Mammary epithelial cell (primary cell): ENCODE measurements at regions of chr15 and their contacts with region 1.

Region 1: DNA sequence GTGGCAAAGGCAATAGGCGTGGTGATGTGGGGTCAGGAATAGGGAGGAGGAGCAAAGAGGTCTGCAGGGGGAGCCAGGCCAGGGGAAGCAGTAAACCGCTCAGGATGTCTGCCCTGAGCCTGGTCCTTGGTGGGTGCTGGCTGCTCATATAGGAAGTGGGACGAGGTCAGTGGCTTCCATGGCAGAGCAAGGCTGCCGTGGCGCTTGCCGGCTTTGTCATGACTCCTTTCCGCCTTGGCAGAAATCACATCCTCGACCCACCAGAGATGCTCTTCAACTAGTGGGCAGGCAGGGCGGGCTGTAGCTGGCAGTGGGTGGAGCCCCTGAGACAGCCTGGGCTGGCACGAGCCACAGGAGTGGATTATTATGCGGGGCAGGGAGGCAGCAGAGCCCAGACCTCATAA is 13.1 kb upstream of the SKOR1 start:
- DNase-seq: no peak
- H3K4me3 ChIP-seq: no peak overlapping the region
- H3K27ac ChIP-seq: no peak overlapping the region
- H3K4me1 ChIP-seq: no peaks in the 10 kb centered on the region
- H3K27me3 ChIP-seq: no peaks in the 10 kb centered on the region
- CTCF ChIP-seq: no peak

Region 2: GRCh38 chr15:67495585-67495984 is 316.7 kb before region 1 on chr15:
- CTCF ChIA-PET with region 1: no interaction called
- dilution Hi-C with region 1: loop called (anchors 10 kb)
- in situ Hi-C with region 1: no loop called
- intact Hi-C with region 1: no loop called
- DNase-seq: no peak
- H3K4me3 ChIP-seq: no peak overlapping the region
- H3K27ac ChIP-seq: no peak overlapping the region
- H3K4me1 ChIP-seq: no peaks in the 10 kb centered on the region
- H3K27me3 ChIP-seq: no peaks in the 10 kb centered on the region
- CTCF ChIP-seq: no peak

Region 3: DNA sequence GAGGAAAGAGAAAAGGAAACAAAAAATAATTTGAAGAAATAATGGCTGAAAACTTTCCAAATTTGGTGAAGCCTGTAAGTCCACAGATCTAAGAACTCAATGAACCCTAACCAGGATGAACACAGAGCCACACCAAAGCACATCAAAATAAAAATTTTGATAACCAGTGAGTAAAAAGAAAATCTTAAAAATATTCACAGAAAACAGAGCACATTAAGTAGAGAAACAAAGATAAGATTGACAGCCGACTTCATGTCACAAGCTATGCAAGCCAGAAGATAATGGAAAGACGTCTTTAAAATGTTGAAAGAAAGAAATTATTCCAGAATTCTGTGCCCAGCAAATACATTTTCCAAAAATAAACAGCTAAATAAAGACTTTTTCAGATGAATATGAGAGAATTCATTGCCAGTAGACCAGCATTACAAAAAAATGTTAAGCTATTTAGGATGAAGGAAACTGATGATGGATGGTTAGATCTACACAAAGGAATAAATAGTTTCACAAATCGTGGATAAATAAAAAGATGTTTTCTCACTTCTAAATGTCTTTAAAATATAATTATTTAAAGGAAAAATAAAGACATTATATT is 127.1 kb before region 1 on chr15:
- CTCF ChIA-PET with region 1: no interaction called
- dilution Hi-C with region 1: no loop called
- in situ Hi-C with region 1: no loop called
- intact Hi-C with region 1: no loop called
- DNase-seq: peak; percentile 26
- H3K4me3 ChIP-seq: no peak overlapping the region
- H3K27ac ChIP-seq: no peak overlapping the region
- H3K4me1 ChIP-seq: no peaks in the 10 kb centered on the region
- H3K27me3 ChIP-seq: no peaks in the 10 kb centered on the region
- CTCF ChIP-seq: no peak

Region 4: GRCh38 chr15:67863442-67863987 is 51.3 kb after region 1 on chr15:
- CTCF ChIA-PET with region 1: no interaction called
- dilution Hi-C with region 1: no loop called
- in situ Hi-C with region 1: no loop called
- intact Hi-C with region 1: no loop called
- DNase-seq: peak; percentile 56
- H3K4me3 ChIP-seq: peak overlapping the region; percentile 35 to 49 (median 47)
- H3K27ac ChIP-seq: no peak overlapping the region
- H3K4me1 ChIP-seq: peaks cover 9% of the 10 kb centered on the region
- H3K27me3 ChIP-seq: no peaks in the 10 kb centered on the region
- CTCF ChIP-seq: peak; percentile 68 to 96

Region 5: DNA sequence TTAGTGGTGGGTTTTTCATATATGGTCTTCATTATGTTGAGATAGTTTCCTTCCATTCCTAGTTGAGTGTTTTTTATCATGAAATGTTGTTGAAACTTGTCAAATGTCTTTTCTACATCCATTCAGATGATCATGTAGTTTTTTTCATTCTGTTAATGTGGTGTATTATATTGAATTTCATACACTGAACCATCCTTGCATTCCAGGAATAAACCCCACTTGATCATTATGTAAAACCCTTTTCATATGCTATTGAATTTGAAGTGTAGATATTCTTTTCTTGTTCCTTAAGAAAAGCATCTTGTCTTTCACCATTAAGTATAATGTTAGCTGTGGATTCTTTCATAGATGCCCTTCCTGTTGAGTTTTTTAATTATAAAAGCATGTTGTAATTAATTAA is 284.8 kb after region 1 on chr15:
- CTCF ChIA-PET with region 1: no interaction called
- dilution Hi-C with region 1: no loop called
- in situ Hi-C with region 1: no loop called
- intact Hi-C with region 1: no loop called
- DNase-seq: no peak
- H3K4me3 ChIP-seq: no peak overlapping the region
- H3K27ac ChIP-seq: no peak overlapping the region
- H3K4me1 ChIP-seq: no peaks in the 10 kb centered on the region
- H3K27me3 ChIP-seq: no peaks in the 10 kb centered on the region
- CTCF ChIP-seq: no peak